Naive thymus-derived CD4-positive, alpha-beta T cell (primary cell): ENCODE measurements at regions of chr1 and their contacts with region 1.

Region 1: GRCh38 chr1:234373064-234373958 is at the start of gene COA6:
- DNase-seq: peak; percentile 76 to 92 (median 90)
- ATAC-seq: peak; percentile 91
- H3K4me3 ChIP-seq: peak within 1 kb of the TSS; percentile 73
- H3K4me3 Mint-ChIP-seq: peak within 1 kb of the TSS; percentile 93 to 100 (median 97)
- H3K27ac ChIP-seq: peak within 1 kb of the TSS; percentile 95
- H3K27ac Mint-ChIP-seq: peak within 1 kb of the TSS; percentile 97 to 100 (median 99)
- H3K4me1 ChIP-seq: peaks cover 12 to 16% of the 10 kb centered on the region in 2 donors
- H3K4me1 Mint-ChIP-seq: peaks cover 30 to 66% (median 63%) of the 10 kb centered on the region in 7 donors
- H3K27me3 ChIP-seq: no peaks in the 10 kb centered on the region
- H3K27me3 Mint-ChIP-seq: no peaks in the 10 kb centered on the region
- total RNA-seq, gene COA6: 9.5 to 47.3 (median 18.5) TPM

Region 2: DNA sequence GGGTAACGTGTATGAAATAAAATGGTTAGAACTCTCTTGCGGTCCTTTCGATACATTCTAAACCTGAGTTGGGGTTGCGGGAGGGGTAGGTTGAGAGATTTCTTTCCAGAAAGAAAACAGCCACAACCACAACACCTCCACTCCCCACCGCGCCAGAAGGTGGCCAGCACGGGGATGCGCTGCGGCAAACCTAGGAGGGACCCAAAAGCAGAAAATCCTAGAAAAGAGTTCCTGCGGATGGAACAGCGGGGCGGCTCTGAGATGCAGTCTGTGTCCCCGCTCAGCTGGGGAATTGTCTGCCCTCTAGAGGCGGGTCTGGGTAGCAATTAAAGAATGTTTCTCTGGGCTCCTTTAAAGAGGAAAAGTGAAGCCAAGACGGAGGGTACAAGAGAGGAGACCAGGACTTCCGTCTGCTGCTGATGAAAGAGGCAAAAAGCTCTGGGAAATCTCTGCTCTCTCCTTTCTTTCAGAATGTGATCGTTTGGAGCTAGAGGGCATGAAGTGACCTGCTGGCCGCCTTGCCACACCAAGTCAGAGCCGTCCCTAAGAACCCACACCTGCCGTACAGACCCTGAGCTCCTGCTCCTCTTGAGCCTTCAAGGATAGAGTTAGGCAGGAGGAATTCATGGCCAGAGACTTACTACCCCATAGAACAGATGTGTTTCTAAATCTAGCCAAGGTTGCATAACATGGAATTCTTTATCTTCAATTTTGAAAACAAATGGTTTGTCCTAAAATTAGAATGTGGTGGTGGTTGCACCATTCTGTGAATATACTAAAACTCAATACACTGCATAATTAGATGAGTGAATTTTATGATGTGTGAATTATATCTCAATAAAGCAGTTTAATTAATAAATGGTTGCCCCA is 46.6 kb before region 1 on chr1:
- CTCF ChIA-PET with region 1: interaction called, 4 read pairs
- POLR2A ChIA-PET with region 1: interaction called, 8 read pairs
- intact Hi-C with region 1: loop called (anchors 1 kb)
- DNase-seq: peak; percentile 32 to 79 (median 67)
- ATAC-seq: peak; percentile 92
- H3K4me3 ChIP-seq: peak overlapping the region; percentile 64
- H3K4me3 Mint-ChIP-seq: peak overlapping the region; percentile 76 to 94 (median 90)
- H3K27ac ChIP-seq: peak overlapping the region; percentile 67
- H3K27ac Mint-ChIP-seq: peak overlapping the region; percentile 41 to 99 (median 85)
- H3K4me1 ChIP-seq: peaks cover 0 to 4% of the 10 kb centered on the region in 2 donors
- H3K4me1 Mint-ChIP-seq: peaks cover 23 to 36% (median 30%) of the 10 kb centered on the region in 7 donors
- H3K27me3 ChIP-seq: no peaks in the 10 kb centered on the region
- H3K27me3 Mint-ChIP-seq: peaks cover 4 to 23% (median 12%) of the 10 kb centered on the region in 5 donors

Region 3: GRCh38 chr1:234362558-234362957 is 10.8 kb before region 1 on chr1:
- CTCF ChIA-PET with region 1: interaction called, 3 read pairs
- POLR2A ChIA-PET with region 1: interaction called, 22 read pairs
- intact Hi-C with region 1: loop called in 1 of 2 experiments (anchors 1 kb)
- DNase-seq: no peak
- ATAC-seq: no peak
- H3K4me3 ChIP-seq: no peak overlapping the region
- H3K4me3 Mint-ChIP-seq: no peak overlapping the region
- H3K27ac ChIP-seq: no peak overlapping the region
- H3K27ac Mint-ChIP-seq: no peak overlapping the region
- H3K4me1 ChIP-seq: peaks cover 0 to 6% of the 10 kb centered on the region in 2 donors
- H3K4me1 Mint-ChIP-seq: peaks cover 0 to 25% (median 13%) of the 10 kb centered on the region in 7 donors
- H3K27me3 ChIP-seq: no peaks in the 10 kb centered on the region
- H3K27me3 Mint-ChIP-seq: peaks cover 0 to 3% (median 0%) of the 10 kb centered on the region in 5 donors

Region 4: GRCh38 chr1:234393190-234393589 is 19.9 kb after region 1 on chr1:
- CTCF ChIA-PET with region 1: interaction called, 3 read pairs
- POLR2A ChIA-PET with region 1: interaction called, 17 read pairs
- intact Hi-C with region 1: no loop called
- DNase-seq: peak in 7 of 9 donors; percentile 25 to 69 (median 54)
- ATAC-seq: peak; percentile 75
- H3K4me3 ChIP-seq: no peak overlapping the region
- H3K4me3 Mint-ChIP-seq: no peak overlapping the region
- H3K27ac ChIP-seq: peak overlapping the region; percentile 32
- H3K27ac Mint-ChIP-seq: peak overlapping the region in 8 of 9 donors; percentile 65 to 96 (median 85)
- H3K4me1 ChIP-seq: peaks cover 0 to 1% of the 10 kb centered on the region in 2 donors
- H3K4me1 Mint-ChIP-seq: peaks cover 8 to 32% (median 18%) of the 10 kb centered on the region in 7 donors
- H3K27me3 ChIP-seq: no peaks in the 10 kb centered on the region
- H3K27me3 Mint-ChIP-seq: no peaks in the 10 kb centered on the region

Region 5: GRCh38 chr1:234409328-234409727 is 36.0 kb after region 1 on chr1:
- CTCF ChIA-PET with region 1: interaction called, 3 read pairs
- POLR2A ChIA-PET with region 1: interaction called, 124 read pairs
- intact Hi-C with region 1: loop called (anchors 1 kb)
- DNase-seq: peak in 7 of 9 donors; percentile 44 to 80 (median 72)
- ATAC-seq: peak; percentile 81
- H3K4me3 ChIP-seq: peak overlapping the region; percentile 35
- H3K4me3 Mint-ChIP-seq: peak overlapping the region; percentile 64 to 89 (median 76)
- H3K27ac ChIP-seq: peak overlapping the region; percentile 83
- H3K27ac Mint-ChIP-seq: peak overlapping the region; percentile 91 to 99 (median 97)
- H3K4me1 ChIP-seq: peaks cover 0 to 48% of the 10 kb centered on the region in 2 donors
- H3K4me1 Mint-ChIP-seq: peaks cover 23 to 55% (median 49%) of the 10 kb centered on the region in 7 donors
- H3K27me3 ChIP-seq: no peaks in the 10 kb centered on the region
- H3K27me3 Mint-ChIP-seq: no peaks in the 10 kb centered on the region

Region 6: GRCh38 chr1:234495211-234495990 is 122.1 kb after region 1 on chr1:
- CTCF ChIA-PET with region 1: no interaction called
- POLR2A ChIA-PET with region 1: no interaction called
- intact Hi-C with region 1: no loop called
- DNase-seq: no peak
- ATAC-seq: no peak
- H3K4me3 ChIP-seq: no peak overlapping the region
- H3K4me3 Mint-ChIP-seq: peak overlapping the region in 1 of 10 donors; percentile 26
- H3K27ac ChIP-seq: no peak overlapping the region
- H3K27ac Mint-ChIP-seq: peak overlapping the region in 2 of 9 donors; percentile 32 to 90
- H3K4me1 ChIP-seq: peaks cover 0 to 12% of the 10 kb centered on the region in 2 donors
- H3K4me1 Mint-ChIP-seq: peaks cover 5 to 62% (median 17%) of the 10 kb centered on the region in 7 donors
- H3K27me3 ChIP-seq: no peaks in the 10 kb centered on the region
- H3K27me3 Mint-ChIP-seq: no peaks in the 10 kb centered on the region

Region 7: DNA sequence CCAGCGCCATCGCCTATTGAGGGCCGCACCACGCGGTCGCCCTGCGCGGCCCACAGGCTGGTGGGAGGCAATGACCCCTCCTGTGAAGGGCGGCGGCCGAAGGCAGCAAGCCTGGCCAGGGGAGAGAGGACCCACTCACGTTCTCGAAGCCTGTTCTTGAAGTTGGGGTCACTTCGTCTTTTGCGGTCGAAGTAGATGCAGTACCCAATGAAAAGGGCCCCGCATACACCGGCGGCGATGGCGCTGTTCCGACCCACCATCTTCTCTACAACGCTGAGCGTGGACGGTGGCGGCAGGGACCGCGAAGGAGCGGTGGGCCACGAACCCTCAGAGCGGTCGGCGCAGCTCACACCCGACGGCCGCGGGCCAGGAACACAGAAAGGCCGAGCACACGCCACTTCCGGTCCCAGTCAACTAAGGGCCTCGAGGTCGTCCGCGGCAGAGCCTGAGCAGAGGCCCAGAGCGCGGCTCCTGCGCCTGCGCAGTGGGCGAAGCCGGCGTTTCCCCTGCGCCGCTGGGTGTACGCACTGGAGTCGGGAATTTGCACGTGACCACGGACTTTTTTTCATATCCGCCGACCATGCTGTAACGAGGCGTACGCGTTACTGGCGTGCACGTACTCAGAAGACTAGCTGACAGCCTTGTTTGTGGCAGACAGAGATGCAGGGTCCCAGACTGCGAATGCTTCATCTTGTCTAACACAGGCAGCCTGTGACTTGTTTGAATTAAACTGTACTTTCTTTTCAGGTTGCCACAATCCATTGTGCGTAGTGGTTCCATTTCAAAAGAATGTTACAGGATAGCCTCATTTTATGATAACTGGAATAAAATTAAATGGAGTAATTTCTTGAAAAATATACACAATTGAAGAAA is 755.4 kb after region 1 on chr1 and contains the start of gene TOMM20:
- CTCF ChIA-PET with region 1: no interaction called
- POLR2A ChIA-PET with region 1: no interaction called
- intact Hi-C with region 1: loop called (anchors 1 kb)
- DNase-seq: peak; percentile 91 to 97 (median 95)
- ATAC-seq: peak; percentile 97
- H3K4me3 ChIP-seq: peak within 1 kb of the TSS; percentile 98
- H3K4me3 Mint-ChIP-seq: peak within 1 kb of the TSS; percentile 88 to 99 (median 96)
- H3K27ac ChIP-seq: peak within 1 kb of the TSS; percentile 94
- H3K27ac Mint-ChIP-seq: peak within 1 kb of the TSS; percentile 93 to 99 (median 98)
- H3K4me1 ChIP-seq: peaks cover 22 to 24% of the 10 kb centered on the region in 2 donors
- H3K4me1 Mint-ChIP-seq: peaks cover 17 to 55% (median 42%) of the 10 kb centered on the region in 7 donors
- H3K27me3 ChIP-seq: no peaks in the 10 kb centered on the region
- H3K27me3 Mint-ChIP-seq: no peaks in the 10 kb centered on the region
- total RNA-seq, gene TOMM20: 88.0 to 124 (median 100) TPM

Region 8: GRCh38 chr1:236281654-236282424 is 1908.5 kb after region 1 on chr1 and contains the start of gene ERO1B:
- CTCF ChIA-PET with region 1: no interaction called
- POLR2A ChIA-PET with region 1: no interaction called
- intact Hi-C with region 1: loop called in 1 of 2 experiments (anchors 10 kb)
- DNase-seq: peak; percentile 95 to 99 (median 97)
- ATAC-seq: peak; percentile 98
- H3K4me3 ChIP-seq: peak within 1 kb of the TSS; percentile 83
- H3K4me3 Mint-ChIP-seq: peak within 1 kb of the TSS; percentile 80 to 97 (median 94)
- H3K27ac ChIP-seq: peak within 1 kb of the TSS; percentile 82
- H3K27ac Mint-ChIP-seq: peak within 1 kb of the TSS; percentile 80 to 96 (median 95)
- H3K4me1 ChIP-seq: peaks cover 7 to 34% of the 10 kb centered on the region in 2 donors
- H3K4me1 Mint-ChIP-seq: peaks cover 29 to 82% (median 57%) of the 10 kb centered on the region in 7 donors
- H3K27me3 ChIP-seq: no peaks in the 10 kb centered on the region
- H3K27me3 Mint-ChIP-seq: peaks cover 0 to 10% (median 0%) of the 10 kb centered on the region in 5 donors
- total RNA-seq, gene ERO1B: 5.0 to 26.8 (median 16.0) TPM